MCF 10A (cell line): ENCODE measurements at regions of chr17 and their contacts with region 1.

Region 1: DNA sequence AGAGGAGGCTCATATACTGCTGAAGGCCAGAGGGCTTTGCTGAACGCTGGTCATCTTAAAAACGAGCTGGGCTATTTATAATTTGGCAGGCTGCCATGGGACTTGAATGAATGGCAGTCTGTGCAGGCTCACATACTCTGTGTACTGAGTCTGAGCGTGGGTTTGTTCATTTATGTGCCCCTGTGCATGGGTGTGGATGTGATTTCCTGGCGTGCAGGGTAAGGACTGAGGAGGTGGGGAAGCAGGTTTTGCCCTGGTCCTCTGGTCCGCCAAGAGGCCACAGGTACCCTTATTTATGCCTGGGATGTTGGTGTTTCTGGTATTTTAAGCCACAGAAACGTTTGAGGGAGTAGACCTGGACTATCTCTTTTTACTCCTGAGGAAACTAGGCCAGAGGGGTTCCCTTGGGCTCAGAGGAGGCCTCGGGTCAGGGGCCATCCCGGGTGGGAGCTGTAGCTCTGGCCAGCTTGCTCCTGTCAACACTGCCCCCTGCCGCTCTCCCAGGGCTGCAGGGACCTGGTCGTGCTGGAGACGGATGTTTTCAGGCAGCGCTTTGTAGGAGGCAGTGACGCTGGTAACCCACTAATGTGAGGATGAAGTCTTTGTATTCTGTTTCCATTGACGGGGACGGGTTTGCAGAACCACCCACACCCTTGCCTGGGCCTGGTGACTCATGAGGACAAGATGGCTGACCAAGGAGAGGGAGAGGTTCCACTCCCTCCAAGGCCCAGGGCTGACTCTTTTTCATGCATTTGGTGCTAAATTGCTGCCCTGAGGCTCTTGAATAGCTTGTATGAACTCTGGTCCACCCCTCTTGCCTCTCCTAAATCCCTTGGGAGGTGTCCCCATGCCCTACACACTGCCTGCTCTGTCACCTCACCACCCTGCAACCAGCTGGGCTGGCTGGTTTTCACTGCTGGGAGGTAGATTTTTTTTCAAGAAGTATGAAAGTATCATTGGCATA is 184.5 kb downstream of the MSI2 start:
- DNase-seq: peak; percentile 90
- H3K4me3 Mint-ChIP-seq: peak overlapping the region; percentile 58
- H3K27ac Mint-ChIP-seq: peak overlapping the region; percentile 88
- H3K4me1 Mint-ChIP-seq: peaks cover 51% of the 10 kb centered on the region
- H3K27me3 Mint-ChIP-seq: no peaks in the 10 kb centered on the region
- CTCF ChIP-seq: peak; percentile 59

Region 2: GRCh38 chr17:57255776-57256681 is 184.8 kb before region 1 on chr17 and contains the start of gene MSI2:
- CTCF ChIA-PET with region 1: interaction called, 3 read pairs
- POLR2A ChIA-PET with region 1: interaction called, 3 read pairs
- intact Hi-C with region 1: loop called (anchors 5 kb)
- DNase-seq: peak; percentile 83
- H3K4me3 Mint-ChIP-seq: peak within 1 kb of the TSS; percentile 96
- H3K27ac Mint-ChIP-seq: peak within 1 kb of the TSS; percentile 89
- H3K4me1 Mint-ChIP-seq: peaks cover 18% of the 10 kb centered on the region
- H3K27me3 Mint-ChIP-seq: no peaks in the 10 kb centered on the region
- CTCF ChIP-seq: no peak
- total RNA-seq, gene MSI2: 52.4 and 60.6 TPM in 2 replicates

Region 3: GRCh38 chr17:57370037-57370581 is 70.7 kb before region 1 on chr17:
- CTCF ChIA-PET with region 1: interaction called, 3 read pairs
- POLR2A ChIA-PET with region 1: interaction called, 5 read pairs
- intact Hi-C with region 1: loop called (anchors 2 kb)
- DNase-seq: peak; percentile 82
- H3K4me3 Mint-ChIP-seq: no peak overlapping the region
- H3K27ac Mint-ChIP-seq: peak overlapping the region; percentile 95
- H3K4me1 Mint-ChIP-seq: peaks cover 58% of the 10 kb centered on the region
- H3K27me3 Mint-ChIP-seq: no peaks in the 10 kb centered on the region
- CTCF ChIP-seq: no peak

Region 4: GRCh38 chr17:57422574-57423164 is 18.1 kb before region 1 on chr17:
- CTCF ChIA-PET with region 1: interaction called, 6 read pairs
- POLR2A ChIA-PET with region 1: interaction called, 16 read pairs
- intact Hi-C with region 1: no loop called
- DNase-seq: peak; percentile 93
- H3K4me3 Mint-ChIP-seq: no peak overlapping the region
- H3K27ac Mint-ChIP-seq: no peak overlapping the region
- H3K4me1 Mint-ChIP-seq: peaks cover 11% of the 10 kb centered on the region
- H3K27me3 Mint-ChIP-seq: no peaks in the 10 kb centered on the region
- CTCF ChIP-seq: no peak

Region 5: GRCh38 chr17:57697891-57698711 is 257.3 kb after region 1 on chr17:
- CTCF ChIA-PET with region 1: no interaction called
- POLR2A ChIA-PET with region 1: no interaction called
- intact Hi-C with region 1: no loop called
- DNase-seq: no peak
- H3K4me3 Mint-ChIP-seq: no peak overlapping the region
- H3K27ac Mint-ChIP-seq: no peak overlapping the region
- H3K4me1 Mint-ChIP-seq: no peaks in the 10 kb centered on the region
- H3K27me3 Mint-ChIP-seq: no peaks in the 10 kb centered on the region
- CTCF ChIP-seq: no peak